ENCODE measurements at regions of chr4 and their contacts with region 1.

Region 1: DNA sequence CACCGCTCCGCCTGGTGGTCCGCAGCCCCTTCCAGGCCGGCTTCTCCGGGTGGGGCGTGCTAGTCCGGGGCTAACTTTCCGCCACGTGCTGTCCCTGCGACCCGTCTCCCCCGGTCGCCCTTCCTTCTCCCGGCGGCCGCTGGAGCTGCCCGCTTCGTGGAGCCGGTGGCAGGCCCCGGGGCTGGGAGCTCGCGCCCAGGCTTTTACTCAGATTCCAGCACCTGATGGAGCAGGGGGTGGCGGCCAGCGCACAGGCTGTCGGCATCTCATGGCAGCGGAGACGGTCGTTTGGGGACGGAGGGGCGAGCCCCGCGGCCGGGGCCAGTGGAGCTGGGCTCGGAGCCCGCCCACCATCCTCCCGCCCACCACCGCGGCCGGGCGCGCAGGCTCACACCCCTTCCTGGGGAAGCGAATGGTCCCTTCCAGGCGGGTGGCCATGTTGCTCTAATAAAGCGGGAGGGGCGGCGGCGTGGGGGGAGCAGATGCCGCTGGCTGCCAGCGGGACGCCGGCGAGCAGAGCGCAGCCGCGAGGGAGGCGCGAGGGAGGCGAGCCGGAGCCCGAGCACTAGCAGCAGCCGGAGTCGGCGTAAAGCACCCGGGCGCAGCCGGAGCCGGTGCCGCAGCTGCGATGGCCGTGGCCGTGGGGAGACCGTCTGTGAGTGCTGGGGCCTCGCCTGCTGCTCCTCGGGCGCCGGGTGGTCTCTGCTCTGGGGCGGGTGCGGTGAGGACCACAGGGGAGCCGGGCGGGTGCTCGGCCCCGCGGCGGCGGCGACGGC is at the start of gene SEPTIN11:
- DNase-seq: peak; percentile 94 to 95
- H3K4me3 ChIP-seq: peak within 1 kb of the TSS; percentile 94
- H3K4me3 Mint-ChIP-seq: peak within 1 kb of the TSS; percentile 100
- H3K27ac Mint-ChIP-seq: peak within 1 kb of the TSS; percentile 97
- H3K4me1 ChIP-seq: peaks cover 5% of the 10 kb centered on the region; the same call in 1 of the 2 replicates
- H3K4me1 Mint-ChIP-seq: peaks cover 12% of the 10 kb centered on the region
- H3K27me3 ChIP-seq: no peaks in the 10 kb centered on the region
- H3K27me3 Mint-ChIP-seq: no peaks in the 10 kb centered on the region
- CTCF ChIP-seq: no peak
- total RNA-seq, gene SEPTIN11: 119 and 127 TPM in 2 replicates

Region 2: DNA sequence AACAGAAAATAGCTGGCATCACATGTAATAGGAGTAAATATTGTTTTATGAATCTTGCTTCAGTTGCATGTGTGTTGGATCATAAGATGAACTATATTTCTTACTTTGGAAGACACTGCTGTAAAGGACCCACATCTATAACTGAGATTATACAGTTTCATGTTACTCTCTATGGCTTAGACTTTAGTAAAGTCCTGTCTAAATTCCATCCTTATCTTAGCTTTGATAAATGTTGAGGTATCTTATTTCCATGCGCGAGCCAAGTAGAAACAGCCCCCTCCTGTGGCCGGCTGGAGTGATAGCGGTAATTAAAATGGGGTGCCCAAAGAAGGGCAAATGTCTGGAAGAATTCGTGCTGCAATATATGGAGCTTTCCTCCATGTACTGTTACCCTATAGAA is 571.6 kb before region 1 on chr4:
- CTCF ChIA-PET with region 1: no interaction called
- POLR2A ChIA-PET with region 1: no interaction called
- intact Hi-C with region 1: no loop called
- DNase-seq: peak; percentile 60 to 70
- H3K4me3 ChIP-seq: no peak overlapping the region
- H3K4me3 Mint-ChIP-seq: no peak overlapping the region
- H3K27ac Mint-ChIP-seq: no peak overlapping the region
- H3K4me1 ChIP-seq: peaks cover 18% of the 10 kb centered on the region
- H3K4me1 Mint-ChIP-seq: peaks cover 10% of the 10 kb centered on the region
- H3K27me3 ChIP-seq: no peaks in the 10 kb centered on the region
- H3K27me3 Mint-ChIP-seq: no peaks in the 10 kb centered on the region
- CTCF ChIP-seq: peak; percentile 63 to 71

Region 3: DNA sequence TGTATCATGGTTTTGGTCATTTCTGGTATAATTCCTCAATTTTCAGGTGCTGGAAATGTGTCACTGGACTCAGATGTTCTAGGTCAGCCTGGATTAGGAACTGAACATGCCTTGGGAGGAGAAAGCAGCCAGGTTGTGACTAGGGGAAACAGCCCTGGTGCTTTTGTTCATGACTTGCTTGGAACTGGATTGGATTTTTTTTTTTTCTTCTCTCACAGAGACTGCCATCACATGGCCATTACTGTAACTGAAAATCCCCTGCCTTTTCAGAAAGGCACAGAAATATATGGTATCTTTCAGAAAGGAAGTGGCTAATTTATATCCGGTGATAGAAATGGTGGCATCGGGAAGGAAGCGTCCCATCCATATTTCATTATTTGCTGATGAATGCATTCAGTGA is 34.7 kb after region 1 on chr4:
- CTCF ChIA-PET with region 1: interaction called, 3 read pairs
- POLR2A ChIA-PET with region 1: no interaction called
- intact Hi-C with region 1: loop called (anchors 1 kb)
- DNase-seq: no peak
- H3K4me3 ChIP-seq: no peak overlapping the region
- H3K4me3 Mint-ChIP-seq: no peak overlapping the region
- H3K27ac Mint-ChIP-seq: no peak overlapping the region
- H3K4me1 ChIP-seq: peaks cover 22% of the 10 kb centered on the region
- H3K4me1 Mint-ChIP-seq: peaks cover 35% of the 10 kb centered on the region
- H3K27me3 ChIP-seq: no peaks in the 10 kb centered on the region
- H3K27me3 Mint-ChIP-seq: no peaks in the 10 kb centered on the region
- CTCF ChIP-seq: peak; percentile 9 to 12